ENCODE measurements at regions of chr4 and their contacts with region 1.

Region 1: DNA sequence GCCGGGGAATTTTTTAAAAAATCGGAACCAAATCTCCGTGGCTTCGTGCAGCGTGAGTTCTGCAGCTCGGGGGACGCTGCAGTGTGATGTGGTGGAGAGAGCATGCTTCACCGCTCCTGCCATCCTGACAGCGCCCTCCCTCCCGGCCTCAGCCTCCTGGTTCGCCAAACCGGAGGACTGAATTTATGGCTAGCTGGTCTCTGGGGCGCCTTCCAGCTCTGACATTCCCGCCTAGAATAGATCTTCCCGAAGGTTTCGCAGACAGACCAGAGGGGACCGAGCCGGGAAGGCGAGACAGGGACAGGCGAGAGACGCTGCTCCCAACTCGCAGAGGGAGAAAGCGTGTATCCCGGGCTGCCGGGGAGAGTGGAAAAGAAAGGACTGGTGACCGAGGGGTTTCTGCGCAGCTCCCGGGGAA is 25.9 kb downstream of the HOPX start:
- DNase-seq: peak in 1 of 2 donors; percentile 53
- ATAC-seq: peak in 2 of 3 donors; percentile 16 to 31
- H3K4me3 ChIP-seq: peak overlapping the region; percentile 66
- H3K4me3 Mint-ChIP-seq: peak overlapping the region; percentile 94
- H3K27ac ChIP-seq: peak overlapping the region; percentile 73
- H3K27ac Mint-ChIP-seq: peak overlapping the region; percentile 95 to 98
- H3K4me1 ChIP-seq: peaks cover 59% of the 10 kb centered on the region
- H3K4me1 Mint-ChIP-seq: peaks cover 74 to 76% of the 10 kb centered on the region in 2 donors
- H3K27me3 ChIP-seq: no peaks in the 10 kb centered on the region
- H3K27me3 Mint-ChIP-seq: no peaks in the 10 kb centered on the region
- CTCF ChIP-seq: no peak

Region 2: DNA sequence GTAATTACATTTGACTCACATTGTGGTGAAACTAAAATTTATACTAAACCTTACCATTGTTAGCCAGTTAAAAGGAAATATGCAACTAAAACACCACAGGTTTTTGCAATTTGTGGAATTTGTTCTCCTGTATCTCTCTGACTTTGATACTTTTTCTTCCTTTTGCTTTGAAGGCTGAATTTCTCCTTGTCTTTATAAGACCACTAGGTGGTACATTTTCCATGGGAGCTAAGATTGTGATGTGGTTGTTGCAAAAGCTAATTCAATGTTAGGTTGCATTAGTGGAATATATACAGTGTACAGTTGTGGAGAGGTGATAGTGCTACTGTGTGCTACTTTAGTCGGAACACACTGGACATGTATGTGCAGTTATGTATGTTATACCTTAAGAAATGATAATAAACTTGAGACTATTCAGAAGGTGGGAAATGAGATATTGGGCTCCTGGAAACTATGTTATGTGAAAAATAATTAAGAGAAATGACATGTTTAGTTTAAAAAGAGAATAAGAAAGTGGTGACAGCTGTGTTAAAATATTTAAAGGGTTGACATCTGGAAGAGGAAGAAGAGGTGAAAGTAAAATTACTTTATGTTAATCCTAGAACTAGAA is 79.3 kb before region 1 on chr4:
- intact Hi-C with region 1: loop called (anchors 1 kb)
- DNase-seq: peak in 1 of 2 donors; percentile 48
- ATAC-seq: peak in 2 of 3 donors; percentile 49 to 59
- H3K4me3 ChIP-seq: no peak overlapping the region
- H3K4me3 Mint-ChIP-seq: no peak overlapping the region
- H3K27ac ChIP-seq: no peak overlapping the region
- H3K27ac Mint-ChIP-seq: no peak overlapping the region
- H3K4me1 ChIP-seq: no peaks in the 10 kb centered on the region
- H3K4me1 Mint-ChIP-seq: peaks cover 7 to 8% of the 10 kb centered on the region in 2 donors
- H3K27me3 ChIP-seq: no peaks in the 10 kb centered on the region
- H3K27me3 Mint-ChIP-seq: no peaks in the 10 kb centered on the region
- CTCF ChIP-seq: peak; percentile 57

Region 3: GRCh38 chr4:56731857-56732256 is 76.6 kb after region 1 on chr4:
- intact Hi-C with region 1: no loop called
- DNase-seq: no peak
- ATAC-seq: no peak
- H3K4me3 ChIP-seq: no peak overlapping the region
- H3K4me3 Mint-ChIP-seq: no peak overlapping the region
- H3K27ac ChIP-seq: no peak overlapping the region
- H3K27ac Mint-ChIP-seq: no peak overlapping the region
- H3K4me1 ChIP-seq: no peaks in the 10 kb centered on the region
- H3K4me1 Mint-ChIP-seq: no peaks in the 10 kb centered on the region
- H3K27me3 ChIP-seq: no peaks in the 10 kb centered on the region
- H3K27me3 Mint-ChIP-seq: no peaks in the 10 kb centered on the region
- CTCF ChIP-seq: no peak